Activated T-helper 1 cell treated with anti-CD3 and anti-CD28 coated beads, Interleukin-12 subunit alpha, Interleukin-12 subunit beta, Interleukin-2, Interleukin-4 antibody, amounts not matched to agents 30 ng/mL and 10 ng/mL and 1 ng/mL, durations not matched to agents 14 hours and 24 hours and 36 hours (primary cell): ENCODE measurements at regions of chr9 and their contacts with region 1.

Region 1: GRCh38 chr9:35954942-35955546 is 2.9 kb downstream of the OR2S2 start:
- DNase-seq: peak; percentile 25
- H3K4me3 Mint-ChIP-seq: no peak overlapping the region
- H3K27ac Mint-ChIP-seq: no peak overlapping the region
- H3K4me1 Mint-ChIP-seq: peaks cover 6% of the 10 kb centered on the region
- H3K27me3 Mint-ChIP-seq: peaks cover 30% of the 10 kb centered on the region

Region 2: DNA sequence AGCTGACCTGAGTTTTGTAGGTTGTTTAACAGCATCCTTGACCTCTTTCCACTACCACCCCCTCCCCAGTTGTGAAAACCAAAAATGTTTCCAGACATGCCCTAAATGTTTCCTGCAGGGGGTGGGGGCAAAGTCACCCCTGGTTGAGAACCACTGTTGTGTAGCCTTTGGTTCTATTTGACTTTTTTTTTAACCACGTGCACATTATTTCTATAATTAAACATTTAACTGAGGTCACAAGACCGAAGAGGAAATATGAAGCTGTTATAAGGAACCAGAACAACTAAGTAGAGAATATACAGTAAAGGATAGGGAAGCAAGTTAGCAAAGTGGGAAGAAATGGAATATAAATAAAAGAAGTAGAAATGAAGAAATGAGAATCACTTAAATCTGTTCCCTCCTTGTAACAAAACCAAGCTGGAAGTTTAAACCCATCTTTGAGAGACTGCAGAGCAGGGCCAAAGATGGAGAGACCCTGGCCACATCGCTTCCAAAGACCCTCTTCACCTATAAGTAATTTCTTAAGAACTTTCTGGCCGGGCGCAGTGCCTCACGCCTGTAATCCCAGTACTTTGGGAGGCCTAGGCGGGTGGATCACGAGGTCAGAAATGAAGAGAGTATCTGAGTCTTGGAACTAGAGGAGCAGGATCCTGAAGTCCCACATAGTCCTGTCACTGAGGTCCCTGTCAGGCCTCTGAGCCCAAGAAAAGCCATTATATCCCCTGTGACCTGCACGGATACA is 318.7 kb before region 1 on chr9:
- intact Hi-C with region 1: no loop called
- DNase-seq: no peak
- H3K4me3 Mint-ChIP-seq: no peak overlapping the region
- H3K27ac Mint-ChIP-seq: peak overlapping the region; percentile 80
- H3K4me1 Mint-ChIP-seq: peaks cover 60% of the 10 kb centered on the region
- H3K27me3 Mint-ChIP-seq: no peaks in the 10 kb centered on the region

Region 3: GRCh38 chr9:36008774-36009300 is 53.8 kb after region 1 on chr9:
- intact Hi-C with region 1: loop called (anchors 5 kb)
- DNase-seq: peak; percentile 42
- H3K4me3 Mint-ChIP-seq: no peak overlapping the region
- H3K27ac Mint-ChIP-seq: no peak overlapping the region
- H3K4me1 Mint-ChIP-seq: peaks cover 14% of the 10 kb centered on the region
- H3K27me3 Mint-ChIP-seq: peaks cover 19% of the 10 kb centered on the region